Caco-2 (cell line): ENCODE measurements at regions of chr1 and their contacts with region 1.

Region 1: GRCh38 chr1:150979092-150980056 is 2.7 kb upstream of the ANXA9 start:
- DNase-seq: peak; percentile 86 to 90
- H3K4me3 ChIP-seq: no peak overlapping the region
- H3K4me3 Mint-ChIP-seq: no peak overlapping the region
- H3K27ac Mint-ChIP-seq: peak overlapping the region; percentile 19
- H3K4me1 ChIP-seq: peaks cover 86% of the 10 kb centered on the region
- H3K4me1 Mint-ChIP-seq: peaks cover 36% of the 10 kb centered on the region
- H3K27me3 ChIP-seq: no peaks in the 10 kb centered on the region
- H3K27me3 Mint-ChIP-seq: no peaks in the 10 kb centered on the region
- CTCF ChIP-seq: peak; percentile 100

Region 2: GRCh38 chr1:150876119-150876454 is 103.3 kb before region 1 on chr1:
- CTCF ChIA-PET with region 1: no interaction called
- POLR2A ChIA-PET with region 1: interaction called, 9 read pairs
- intact Hi-C with region 1: loop called (anchors 5 kb)
- DNase-seq: no peak
- H3K4me3 ChIP-seq: peak overlapping the region; percentile 83
- H3K4me3 Mint-ChIP-seq: peak overlapping the region; percentile 81
- H3K27ac Mint-ChIP-seq: peak overlapping the region; percentile 86
- H3K4me1 ChIP-seq: peaks cover 12% of the 10 kb centered on the region; the same call in 1 of the 2 replicates
- H3K4me1 Mint-ChIP-seq: peaks cover 7% of the 10 kb centered on the region
- H3K27me3 ChIP-seq: no peaks in the 10 kb centered on the region
- H3K27me3 Mint-ChIP-seq: no peaks in the 10 kb centered on the region
- CTCF ChIP-seq: no peak

Region 3: DNA sequence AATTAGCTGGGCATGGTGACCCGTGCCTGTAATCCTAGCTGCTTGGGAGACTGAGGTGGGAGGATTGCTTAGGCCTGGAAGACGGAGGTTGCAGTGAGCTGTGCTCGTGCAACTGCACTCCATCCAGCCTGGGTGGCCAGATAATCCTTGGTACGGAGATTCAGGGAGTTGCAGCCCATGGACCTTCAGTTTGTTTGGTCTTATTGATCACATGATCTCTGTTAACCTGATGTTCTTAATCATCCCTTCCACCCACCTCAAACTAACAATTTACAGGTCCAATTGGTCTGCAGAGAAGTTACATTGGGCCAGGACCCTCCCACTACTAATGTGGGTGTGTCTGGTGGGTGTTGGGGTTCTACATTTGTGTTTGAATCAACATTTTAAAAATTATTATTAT is 64.2 kb before region 1 on chr1:
- CTCF ChIA-PET with region 1: no interaction called
- POLR2A ChIA-PET with region 1: no interaction called
- intact Hi-C with region 1: no loop called
- DNase-seq: no peak
- H3K4me3 ChIP-seq: no peak overlapping the region
- H3K4me3 Mint-ChIP-seq: no peak overlapping the region
- H3K27ac Mint-ChIP-seq: no peak overlapping the region
- H3K4me1 ChIP-seq: no peaks in the 10 kb centered on the region
- H3K4me1 Mint-ChIP-seq: no peaks in the 10 kb centered on the region
- H3K27me3 ChIP-seq: no peaks in the 10 kb centered on the region
- H3K27me3 Mint-ChIP-seq: no peaks in the 10 kb centered on the region
- CTCF ChIP-seq: no peak

Region 4: GRCh38 chr1:150995896-150996295 is 16.5 kb after region 1 on chr1:
- CTCF ChIA-PET with region 1: interaction called, 34 read pairs
- POLR2A ChIA-PET with region 1: interaction called, 5 read pairs
- intact Hi-C with region 1: loop called (anchors 1 kb)
- DNase-seq: peak in 1 of 2 experiments; percentile 55
- H3K4me3 ChIP-seq: no peak overlapping the region
- H3K4me3 Mint-ChIP-seq: no peak overlapping the region
- H3K27ac Mint-ChIP-seq: peak overlapping the region; percentile 26
- H3K4me1 ChIP-seq: peaks cover 15% of the 10 kb centered on the region; the same call in 1 of the 2 replicates
- H3K4me1 Mint-ChIP-seq: peaks cover 11% of the 10 kb centered on the region
- H3K27me3 ChIP-seq: no peaks in the 10 kb centered on the region
- H3K27me3 Mint-ChIP-seq: no peaks in the 10 kb centered on the region
- CTCF ChIP-seq: peak; percentile 66 to 95

Region 5: DNA sequence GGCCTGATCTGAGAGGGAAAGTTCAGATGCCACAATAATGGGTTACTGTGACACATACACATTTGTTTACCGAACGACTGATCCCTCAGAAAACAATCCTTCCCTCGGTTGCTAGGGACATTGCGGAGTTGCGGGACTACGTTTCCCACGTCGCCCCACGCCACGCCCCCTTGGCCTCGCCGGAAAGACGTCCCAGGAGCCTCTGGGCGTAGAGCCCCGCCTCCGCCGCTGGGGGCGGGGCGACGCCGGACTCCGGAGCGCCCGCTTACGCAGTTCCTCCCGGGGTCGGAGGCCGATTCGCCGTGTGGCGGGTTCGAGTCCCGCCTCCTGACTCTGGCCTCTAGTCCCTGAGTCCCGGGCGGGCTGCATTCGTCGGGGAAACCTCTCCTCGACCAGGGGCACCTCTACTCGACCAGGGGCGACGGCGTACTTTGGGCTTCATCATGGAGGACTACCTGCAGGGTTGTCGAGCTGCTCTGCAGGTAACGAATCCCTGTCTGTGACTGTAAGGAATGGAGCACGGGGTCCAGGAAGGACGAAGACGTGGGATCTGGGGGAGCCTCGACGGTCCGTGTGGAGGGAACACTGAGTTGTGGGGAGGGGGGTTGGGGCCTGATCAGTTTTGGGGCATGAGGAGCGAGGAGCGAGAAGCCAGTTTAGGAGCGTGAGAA is 29.0 kb after region 1 on chr1 and contains the start of gene PRUNE1:
- CTCF ChIA-PET with region 1: interaction called, 40 read pairs
- POLR2A ChIA-PET with region 1: interaction called, 11 read pairs
- intact Hi-C with region 1: loop called (anchors 1 kb)
- DNase-seq: peak; percentile 96 to 97
- H3K4me3 ChIP-seq: peak within 1 kb of the TSS; percentile 71
- H3K4me3 Mint-ChIP-seq: peak within 1 kb of the TSS; percentile 92
- H3K27ac Mint-ChIP-seq: peak within 1 kb of the TSS; percentile 99
- H3K4me1 ChIP-seq: peaks cover 46% of the 10 kb centered on the region
- H3K4me1 Mint-ChIP-seq: peaks cover 21% of the 10 kb centered on the region
- H3K27me3 ChIP-seq: no peaks in the 10 kb centered on the region
- H3K27me3 Mint-ChIP-seq: no peaks in the 10 kb centered on the region
- CTCF ChIP-seq: no peak
- total RNA-seq, gene PRUNE1: 24.2 and 24.3 TPM in 2 replicates

Region 6: DNA sequence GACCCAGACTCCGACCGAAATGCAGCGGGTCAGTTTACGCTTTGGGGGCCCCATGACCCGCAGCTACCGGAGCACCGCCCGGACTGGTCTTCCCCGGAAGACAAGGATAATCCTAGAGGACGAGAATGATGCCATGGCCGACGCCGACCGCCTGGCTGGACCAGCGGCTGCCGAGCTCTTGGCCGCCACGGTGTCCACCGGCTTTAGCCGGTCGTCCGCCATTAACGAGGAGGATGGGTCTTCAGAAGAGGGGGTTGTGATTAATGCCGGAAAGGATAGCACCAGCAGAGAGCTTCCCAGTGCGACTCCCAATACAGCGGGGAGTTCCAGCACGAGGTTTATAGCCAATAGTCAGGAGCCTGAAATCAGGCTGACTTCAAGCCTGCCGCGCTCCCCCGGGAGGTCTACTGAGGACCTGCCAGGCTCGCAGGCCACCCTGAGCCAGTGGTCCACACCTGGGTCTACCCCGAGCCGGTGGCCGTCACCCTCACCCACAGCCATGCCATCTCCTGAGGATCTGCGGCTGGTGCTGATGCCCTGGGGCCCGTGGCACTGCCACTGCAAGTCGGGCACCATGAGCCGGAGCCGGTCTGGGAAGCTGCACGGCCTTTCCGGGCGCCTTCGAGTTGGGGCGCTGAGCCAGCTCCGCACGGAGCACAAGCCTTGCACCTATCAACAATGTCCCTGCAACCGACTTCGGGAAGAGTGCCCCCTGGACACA is 68.7 kb after region 1 on chr1:
- CTCF ChIA-PET with region 1: interaction called, 3 read pairs
- POLR2A ChIA-PET with region 1: interaction called, 3 read pairs
- intact Hi-C with region 1: loop called (anchors 2 kb)
- DNase-seq: peak; percentile 69
- H3K4me3 ChIP-seq: peak overlapping the region; percentile 72
- H3K4me3 Mint-ChIP-seq: peak overlapping the region; percentile 81
- H3K27ac Mint-ChIP-seq: peak overlapping the region; percentile 74
- H3K4me1 ChIP-seq: peaks cover 4% of the 10 kb centered on the region
- H3K4me1 Mint-ChIP-seq: no peaks in the 10 kb centered on the region
- H3K27me3 ChIP-seq: no peaks in the 10 kb centered on the region
- H3K27me3 Mint-ChIP-seq: no peaks in the 10 kb centered on the region
- CTCF ChIP-seq: peak in 1 of 2 experiments; percentile 55